ENCODE measurements at regions of chr20 and their contacts with region 1.

Region 1: GRCh38 chr20:7285918-7286556 is 518.6 kb downstream of the BMP2 start:
- DNase-seq: peak; percentile 67
- H3K4me3 ChIP-seq: no peak overlapping the region
- H3K27ac ChIP-seq: no peak overlapping the region
- H3K4me1 ChIP-seq: no peaks in the 10 kb centered on the region
- H3K27me3 ChIP-seq: no peaks in the 10 kb centered on the region
- CTCF ChIP-seq: peak; percentile 59 to 83 (median 72)
- EP300 ChIP-seq: no peak
- POLR2A ChIP-seq: no peak

Region 2: GRCh38 chr20:6767536-6768227 is 518.4 kb before region 1 on chr20 and contains the start of gene BMP2:
- in situ Hi-C with region 1: loop called in 2 of 4 experiments (anchors 25 kb)
- intact Hi-C with region 1: no loop called
- DNase-seq: peak; percentile 72
- H3K4me3 ChIP-seq: peak within 1 kb of the TSS; percentile 65 to 74 (median 70)
- H3K27ac ChIP-seq: peak within 1 kb of the TSS; percentile 83 to 91 (median 86)
- H3K4me1 ChIP-seq: peaks cover 0 to 36% (median 16%) of the 10 kb centered on the region in 4 donors
- H3K27me3 ChIP-seq: peaks cover 4% of the 10 kb centered on the region
- CTCF ChIP-seq: no peak
- EP300 ChIP-seq: no peak
- POLR2A ChIP-seq: no peak
- total RNA-seq, gene BMP2: 16.7 to 109 (median 48.4) TPM

Region 3: DNA sequence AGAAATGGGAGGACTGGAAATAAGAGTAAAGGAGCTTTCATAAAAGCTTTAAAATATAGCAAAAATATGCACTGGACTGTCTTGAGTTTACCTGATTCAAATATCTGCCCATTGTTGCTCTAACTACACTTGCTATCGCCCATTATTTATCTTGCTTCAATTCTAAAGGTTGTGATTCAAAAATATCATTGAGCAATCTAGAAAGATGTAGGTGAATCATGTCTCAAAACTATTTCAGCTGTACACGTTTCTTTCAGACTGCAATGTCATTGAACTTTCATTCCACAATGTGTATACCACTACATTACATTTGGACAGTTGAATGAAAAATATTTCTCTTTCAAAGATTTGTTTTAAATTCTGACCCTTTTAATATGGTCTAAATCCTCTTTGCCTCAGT is 27.0 kb after region 1 on chr20:
- in situ Hi-C with region 1: no loop called
- intact Hi-C with region 1: no loop called
- DNase-seq: no peak
- H3K4me3 ChIP-seq: no peak overlapping the region
- H3K27ac ChIP-seq: no peak overlapping the region
- H3K4me1 ChIP-seq: no peaks in the 10 kb centered on the region
- H3K27me3 ChIP-seq: no peaks in the 10 kb centered on the region
- CTCF ChIP-seq: no peak
- EP300 ChIP-seq: no peak
- POLR2A ChIP-seq: no peak

Region 4: GRCh38 chr20:7866285-7866684 is 580.2 kb after region 1 on chr20:
- in situ Hi-C with region 1: no loop called
- intact Hi-C with region 1: no loop called
- DNase-seq: no peak
- H3K4me3 ChIP-seq: no peak overlapping the region
- H3K27ac ChIP-seq: no peak overlapping the region
- H3K4me1 ChIP-seq: no peaks in the 10 kb centered on the region
- H3K27me3 ChIP-seq: no peaks in the 10 kb centered on the region
- CTCF ChIP-seq: no peak
- EP300 ChIP-seq: no peak
- POLR2A ChIP-seq: no peak